ENCODE measurements at regions of chr14 and their contacts with region 1.

Region 1: DNA sequence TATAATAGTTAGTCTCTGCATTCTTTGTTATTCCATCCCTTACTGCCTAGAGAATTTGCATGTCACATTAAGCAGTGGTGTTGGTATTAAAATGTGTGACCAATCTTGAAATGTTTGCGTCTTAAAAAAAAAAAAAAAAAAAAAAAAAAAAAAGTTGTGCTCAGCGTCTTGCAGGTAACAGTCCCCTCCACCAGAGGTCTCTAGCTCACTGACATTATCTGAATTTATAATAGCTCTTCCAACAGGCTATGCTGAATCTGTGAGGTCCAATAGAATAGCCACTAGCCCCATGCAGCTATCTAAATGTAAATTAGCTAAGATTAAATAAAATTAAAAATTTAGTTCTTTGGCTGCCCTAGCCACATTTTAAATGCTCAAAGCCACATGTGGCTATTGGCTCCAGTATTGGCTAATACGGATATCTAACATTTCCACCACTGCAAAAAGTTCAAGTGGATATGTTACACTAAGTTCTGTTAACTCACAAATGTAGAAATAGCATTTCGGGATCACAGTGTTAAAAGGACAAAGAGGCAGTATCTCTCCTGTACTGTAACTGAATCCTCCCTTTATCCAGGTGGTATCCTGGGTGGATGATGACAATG is 28.7 kb downstream of the NKX2-8 start:
- DNase-seq: peak; percentile 41
- ATAC-seq: peak; percentile 89
- H3K4me3 ChIP-seq: no peak overlapping the region
- H3K27ac ChIP-seq: no peak overlapping the region
- H3K4me1 ChIP-seq: no peaks in the 10 kb centered on the region
- H3K27me3 ChIP-seq: no peaks in the 10 kb centered on the region
- CTCF ChIP-seq: peak; percentile 67 to 72 (median 72); a peak in 5 of 6 replicates
- POLR2A ChIP-seq: no peak
- RAD21 ChIP-seq: peak; percentile 67

Region 2: DNA sequence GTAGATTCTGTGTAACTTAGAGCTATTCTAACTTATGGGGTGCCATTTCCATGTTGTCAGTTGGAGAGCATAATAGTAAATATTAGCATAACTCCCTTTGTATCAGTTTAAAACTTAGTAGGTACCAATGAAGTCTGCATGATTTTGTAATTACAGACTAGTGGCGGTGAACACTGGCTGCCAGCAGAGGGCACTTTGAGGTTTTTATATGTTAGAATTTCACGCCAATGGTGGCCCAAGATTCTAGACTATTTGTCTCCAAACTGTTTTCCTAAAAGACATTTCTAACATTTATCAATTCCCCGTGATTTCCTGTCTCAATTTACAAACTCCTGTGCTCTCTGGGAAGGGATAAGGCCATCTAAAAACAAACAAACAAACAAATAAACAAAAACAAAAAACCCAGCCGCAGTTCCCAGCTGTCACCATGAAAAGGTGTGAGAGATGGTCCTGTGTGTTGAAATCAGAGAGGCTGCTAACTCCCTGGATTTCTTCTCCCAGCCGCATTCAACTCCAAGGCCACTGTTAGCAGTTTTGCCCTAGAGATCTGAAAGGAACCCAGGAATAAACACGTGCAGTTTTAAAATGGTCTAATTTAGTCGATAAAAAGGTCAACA is 670.0 kb before region 1 on chr14:
- CTCF ChIA-PET with region 1: interaction called, 3 read pairs
- POLR2A ChIA-PET with region 1: no interaction called
- RAD21 ChIA-PET with region 1: no interaction called
- intact Hi-C with region 1: loop called (anchors 2 kb)
- DNase-seq: no peak
- ATAC-seq: peak; percentile 70
- H3K4me3 ChIP-seq: no peak overlapping the region
- H3K27ac ChIP-seq: no peak overlapping the region
- H3K4me1 ChIP-seq: peaks cover 5 to 6% of the 10 kb centered on the region in 2 experiments
- H3K27me3 ChIP-seq: no peaks in the 10 kb centered on the region
- CTCF ChIP-seq: peak; percentile 46 to 84 (median 76); a peak in 5 of 6 replicates
- POLR2A ChIP-seq: no peak
- RAD21 ChIP-seq: peak; percentile 56

Region 3: GRCh38 chr14:36373982-36374673 is 179.6 kb before region 1 on chr14:
- CTCF ChIA-PET with region 1: interaction called, 10 read pairs
- POLR2A ChIA-PET with region 1: no interaction called
- RAD21 ChIA-PET with region 1: no interaction called
- intact Hi-C with region 1: no loop called
- DNase-seq: peak; percentile 82
- ATAC-seq: peak; percentile 100
- H3K4me3 ChIP-seq: no peak overlapping the region
- H3K27ac ChIP-seq: no peak overlapping the region
- H3K4me1 ChIP-seq: no peaks in the 10 kb centered on the region
- H3K27me3 ChIP-seq: no peaks in the 10 kb centered on the region
- CTCF ChIP-seq: peak; percentile 73 to 93 (median 90)
- POLR2A ChIP-seq: no peak
- RAD21 ChIP-seq: peak; percentile 76

Region 4: DNA sequence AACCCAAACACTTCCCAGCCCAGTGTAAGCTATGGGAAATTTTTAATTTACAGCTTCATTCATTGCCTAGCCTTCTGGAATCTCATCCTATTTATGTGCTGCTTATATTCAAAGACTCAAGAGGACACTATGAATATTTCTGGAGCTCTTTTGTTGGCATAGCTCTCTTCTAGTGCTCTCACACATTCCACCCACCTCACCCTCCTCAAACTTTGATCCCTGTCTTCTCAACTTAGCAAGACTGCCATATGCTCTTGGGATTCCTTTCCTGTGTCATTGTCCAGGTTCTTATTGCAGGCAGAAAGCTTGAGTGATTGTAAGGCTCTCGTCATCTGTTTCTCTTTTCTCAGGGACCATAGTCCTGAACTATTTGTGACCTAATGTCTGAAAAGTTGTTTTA is 15.7 kb before region 1 on chr14:
- CTCF ChIA-PET with region 1: interaction called, 10 read pairs
- POLR2A ChIA-PET with region 1: no interaction called
- RAD21 ChIA-PET with region 1: no interaction called
- intact Hi-C with region 1: no loop called
- DNase-seq: no peak
- ATAC-seq: no peak
- H3K4me3 ChIP-seq: no peak overlapping the region
- H3K27ac ChIP-seq: no peak overlapping the region
- H3K4me1 ChIP-seq: no peaks in the 10 kb centered on the region
- H3K27me3 ChIP-seq: no peaks in the 10 kb centered on the region
- CTCF ChIP-seq: no peak
- POLR2A ChIP-seq: no peak
- RAD21 ChIP-seq: no peak

Region 5: GRCh38 chr14:36747411-36748184 is 193.8 kb after region 1 on chr14:
- CTCF ChIA-PET with region 1: interaction called, 11 read pairs
- POLR2A ChIA-PET with region 1: no interaction called
- RAD21 ChIA-PET with region 1: no interaction called
- intact Hi-C with region 1: no loop called
- DNase-seq: no peak
- ATAC-seq: peak; percentile 86
- H3K4me3 ChIP-seq: no peak overlapping the region
- H3K27ac ChIP-seq: no peak overlapping the region
- H3K4me1 ChIP-seq: no peaks in the 10 kb centered on the region
- H3K27me3 ChIP-seq: no peaks in the 10 kb centered on the region
- CTCF ChIP-seq: peak; percentile 48 to 84 (median 70); a peak in 5 of 6 replicates
- POLR2A ChIP-seq: no peak
- RAD21 ChIP-seq: peak; percentile 31

Region 6: GRCh38 chr14:37116933-37117849 is 563.4 kb after region 1 on chr14:
- CTCF ChIA-PET with region 1: interaction called, 12 read pairs
- POLR2A ChIA-PET with region 1: no interaction called
- RAD21 ChIA-PET with region 1: no interaction called
- intact Hi-C with region 1: no loop called
- DNase-seq: peak; percentile 6
- ATAC-seq: no peak; the same call in 1 of the 2 replicates
- H3K4me3 ChIP-seq: no peak overlapping the region
- H3K27ac ChIP-seq: peak overlapping the region; percentile 41; the same call in 1 of the 2 replicates
- H3K4me1 ChIP-seq: peaks cover 4 to 14% of the 10 kb centered on the region in 2 experiments; a peak in 3 of 4 replicates
- H3K27me3 ChIP-seq: no peaks in the 10 kb centered on the region
- CTCF ChIP-seq: peak; percentile 19 to 48 (median 36); a peak in 4 of 6 replicates
- POLR2A ChIP-seq: no peak
- RAD21 ChIP-seq: peak; percentile 57

Region 7: DNA sequence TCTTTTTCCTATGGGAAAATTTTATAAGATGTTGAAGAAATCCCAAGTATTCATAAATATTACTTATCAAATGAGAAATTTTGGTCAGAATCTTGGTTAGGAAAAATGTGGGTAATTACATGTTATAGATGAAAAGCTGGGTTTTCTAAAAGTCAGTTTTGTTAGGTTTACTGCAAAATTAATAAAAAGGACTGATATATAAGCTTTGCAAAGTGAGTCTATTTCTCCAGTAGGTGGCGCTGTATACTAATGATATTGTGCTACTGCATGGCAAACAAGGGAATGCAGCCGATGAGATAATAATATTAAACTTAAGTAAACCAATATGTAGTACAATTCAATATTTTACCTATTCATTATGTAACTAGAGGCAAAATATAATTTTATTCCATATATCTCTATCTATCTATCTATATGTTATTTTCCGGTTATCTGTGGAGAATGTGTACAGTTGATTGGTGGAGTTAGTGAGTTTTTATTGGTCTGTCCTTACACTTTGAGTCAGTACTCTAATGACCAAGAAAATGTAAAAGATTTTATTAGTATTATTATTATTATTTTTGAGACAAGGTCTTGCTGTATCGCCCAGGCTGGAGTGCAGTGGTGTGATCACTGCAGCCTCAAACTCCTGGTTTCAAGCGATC is 676.9 kb after region 1 on chr14:
- CTCF ChIA-PET with region 1: interaction called, 4 read pairs
- POLR2A ChIA-PET with region 1: no interaction called
- RAD21 ChIA-PET with region 1: interaction called in 1 of 2 experiments, 3 read pairs
- intact Hi-C with region 1: loop called (anchors 5 kb)
- DNase-seq: peak; percentile 48
- ATAC-seq: peak; percentile 81
- H3K4me3 ChIP-seq: no peak overlapping the region
- H3K27ac ChIP-seq: no peak overlapping the region
- H3K4me1 ChIP-seq: no peaks in the 10 kb centered on the region
- H3K27me3 ChIP-seq: no peaks in the 10 kb centered on the region
- CTCF ChIP-seq: peak; percentile 24 to 86 (median 62); a peak in 4 of 6 replicates
- POLR2A ChIP-seq: no peak
- RAD21 ChIP-seq: peak; percentile 42